A549 (cell line): ENCODE measurements at regions of chr10 and their contacts with region 1.

Region 1: GRCh38 chr10:103712570-103713498 is 142.5 kb downstream of the SH3PXD2A start:
- DNase-seq: peak; percentile 71 to 74
- ATAC-seq: peak; percentile 79 to 90
- H3K4me3 ChIP-seq: no peak overlapping the region
- H3K27ac ChIP-seq: peak overlapping the region in 1 of 2 experiments; percentile 35; a peak in 2 of 6 replicates
- H3K4me1 ChIP-seq: peaks cover 19% of the 10 kb centered on the region; the same call in 2 of the 3 replicates
- CTCF ChIP-seq: peak; percentile 94
- EP300 ChIP-seq: no peak
- POLR2A ChIP-seq: no peak
- RAD21 ChIP-seq: peak; percentile 98

Region 2: GRCh38 chr10:103491493-103492381 is 221.1 kb before region 1 on chr10:
- CTCF ChIA-PET with region 1: no interaction called
- POLR2A ChIA-PET with region 1: no interaction called
- DNase-seq: peak; percentile 68 to 77
- ATAC-seq: peak; percentile 69 to 74
- H3K4me3 ChIP-seq: no peak overlapping the region
- H3K27ac ChIP-seq: no peak overlapping the region
- H3K4me1 ChIP-seq: peaks cover 13% of the 10 kb centered on the region
- CTCF ChIP-seq: no peak
- EP300 ChIP-seq: no peak
- POLR2A ChIP-seq: no peak
- RAD21 ChIP-seq: no peak

Region 3: DNA sequence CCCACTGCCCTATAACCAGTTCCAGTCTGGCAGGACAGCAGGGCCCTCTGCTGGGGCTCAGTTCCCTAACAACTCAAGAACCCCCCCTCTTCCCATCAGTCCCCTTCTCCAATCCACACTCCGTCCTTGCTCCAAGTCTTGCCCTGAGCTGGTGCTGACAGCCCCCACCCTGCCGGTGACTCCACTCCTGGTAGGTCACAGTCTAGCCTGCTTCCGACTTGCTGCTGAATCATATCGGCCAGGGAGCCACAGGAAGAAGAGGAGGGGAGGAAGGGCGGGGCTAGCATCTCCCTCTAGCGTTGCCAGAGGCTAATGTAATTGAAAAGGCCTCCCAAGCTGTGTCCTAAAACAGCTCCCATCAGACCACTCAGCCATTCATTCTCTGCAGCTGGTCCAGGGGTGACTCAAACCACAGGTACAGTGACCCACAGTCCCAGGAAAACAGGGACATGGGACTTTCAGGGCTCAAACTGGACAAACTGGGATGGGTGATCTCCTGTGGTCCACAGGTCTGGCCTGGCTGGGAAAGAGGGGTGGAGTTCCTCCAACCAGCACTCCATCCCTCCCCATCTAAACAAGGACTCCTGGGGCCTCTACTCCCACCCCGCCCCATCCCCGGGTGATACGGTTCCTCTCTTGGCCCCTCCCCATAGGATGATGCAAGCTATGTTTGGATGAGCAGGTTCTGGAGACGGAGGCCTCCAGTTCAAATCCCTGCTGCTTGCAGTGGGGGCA is 16.3 kb before region 1 on chr10:
- CTCF ChIA-PET with region 1: interaction called, 53 read pairs
- POLR2A ChIA-PET with region 1: no interaction called
- DNase-seq: peak; percentile 91 to 95
- ATAC-seq: peak; percentile 82 to 90
- H3K4me3 ChIP-seq: 0 out of 3 replicates have a peak overlapping the region, but pooled peaks have one; percentile 7
- H3K27ac ChIP-seq: peak overlapping the region; percentile 90 to 91
- H3K4me1 ChIP-seq: peaks cover 61% of the 10 kb centered on the region
- CTCF ChIP-seq: peak; percentile 34
- EP300 ChIP-seq: no peak
- POLR2A ChIP-seq: no peak
- RAD21 ChIP-seq: peak; percentile 15 to 18; a peak in 1 of 5 replicates

Region 4: GRCh38 chr10:103752680-103753248 is 39.9 kb after region 1 on chr10:
- CTCF ChIA-PET with region 1: interaction called, 23 read pairs
- POLR2A ChIA-PET with region 1: no interaction called
- DNase-seq: peak in 1 of 2 experiments; percentile 35
- ATAC-seq: no peak
- H3K4me3 ChIP-seq: no peak overlapping the region
- H3K27ac ChIP-seq: no peak overlapping the region
- H3K4me1 ChIP-seq: peaks cover 14% of the 10 kb centered on the region
- CTCF ChIP-seq: peak; percentile 63
- EP300 ChIP-seq: no peak
- POLR2A ChIP-seq: no peak
- RAD21 ChIP-seq: peak; percentile 19 to 20; a peak in 2 of 5 replicates

Region 5: DNA sequence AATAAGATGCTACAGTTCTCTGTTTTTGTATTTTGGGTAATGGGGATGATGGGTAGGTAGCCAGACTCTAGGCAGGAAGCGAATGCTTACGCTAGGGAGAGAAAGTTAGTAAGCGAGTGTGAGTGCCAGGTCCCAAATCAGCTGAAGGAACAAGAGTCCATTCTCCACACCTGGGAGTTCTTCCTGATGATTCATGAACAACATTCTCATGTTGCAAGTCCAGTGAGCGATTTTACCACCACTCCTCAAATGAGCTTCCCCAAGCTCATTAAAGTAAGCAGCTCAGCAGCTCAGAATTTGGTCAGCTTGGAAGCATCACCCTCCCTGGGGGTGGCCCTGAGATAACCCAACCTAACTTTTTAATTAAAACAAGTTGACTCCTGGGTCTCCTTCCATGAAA is 115.3 kb after region 1 on chr10:
- CTCF ChIA-PET with region 1: interaction called, 12 read pairs
- POLR2A ChIA-PET with region 1: no interaction called
- DNase-seq: no peak
- ATAC-seq: no peak
- H3K4me3 ChIP-seq: no peak overlapping the region
- H3K27ac ChIP-seq: no peak overlapping the region
- H3K4me1 ChIP-seq: peaks cover 18% of the 10 kb centered on the region; the same call in 2 of the 3 replicates
- CTCF ChIP-seq: no peak
- EP300 ChIP-seq: no peak
- POLR2A ChIP-seq: no peak
- RAD21 ChIP-seq: no peak

Region 6: DNA sequence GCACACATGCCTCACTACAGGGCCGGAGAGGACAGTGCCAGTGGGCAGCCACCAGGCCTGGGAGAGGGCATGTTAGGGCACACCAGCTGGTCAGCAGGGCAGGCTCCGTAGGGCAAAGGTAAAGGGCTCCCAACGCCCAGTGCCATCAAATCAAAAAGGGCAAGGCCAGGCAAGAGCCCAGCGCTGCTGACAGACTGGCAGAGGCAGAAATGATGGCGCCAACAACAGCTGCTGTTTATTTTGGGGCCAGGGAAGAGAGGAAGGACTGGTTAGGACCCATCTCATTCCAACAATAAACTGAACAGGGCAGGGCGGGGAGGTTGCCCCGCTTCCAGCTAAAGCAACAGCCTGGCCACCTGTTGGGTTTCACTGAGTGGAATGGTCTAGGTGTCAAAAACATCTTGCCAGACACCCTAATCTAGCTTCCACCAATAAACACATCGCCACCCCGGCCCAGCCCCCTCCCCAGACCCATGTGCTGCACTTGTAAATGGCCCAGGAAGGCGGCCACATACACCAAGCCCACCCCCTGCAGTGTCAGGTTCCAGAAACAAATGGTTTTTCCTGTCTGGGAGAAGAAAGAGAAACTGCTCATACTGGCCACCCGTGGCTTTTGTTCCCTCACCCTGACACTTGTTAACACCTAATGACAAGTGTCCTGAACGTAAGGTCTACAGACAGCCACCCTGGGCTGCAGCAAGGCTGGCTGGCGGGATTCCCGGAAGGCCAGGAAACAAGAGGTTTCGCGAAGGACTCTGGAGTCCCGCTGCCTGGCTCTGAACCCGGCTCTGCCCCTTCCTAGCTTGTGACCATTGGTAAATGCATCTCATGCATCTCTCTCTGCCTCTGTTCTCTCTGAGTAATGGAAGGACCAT is 127.3 kb after region 1 on chr10:
- CTCF ChIA-PET with region 1: interaction called, 15 read pairs
- POLR2A ChIA-PET with region 1: no interaction called
- DNase-seq: no peak
- ATAC-seq: no peak
- H3K4me3 ChIP-seq: no peak overlapping the region
- H3K27ac ChIP-seq: no peak overlapping the region; a peak in 1 of 6 replicates
- H3K4me1 ChIP-seq: peaks cover 13% of the 10 kb centered on the region
- CTCF ChIP-seq: no peak
- EP300 ChIP-seq: no peak
- POLR2A ChIP-seq: no peak
- RAD21 ChIP-seq: no peak

Region 7: DNA sequence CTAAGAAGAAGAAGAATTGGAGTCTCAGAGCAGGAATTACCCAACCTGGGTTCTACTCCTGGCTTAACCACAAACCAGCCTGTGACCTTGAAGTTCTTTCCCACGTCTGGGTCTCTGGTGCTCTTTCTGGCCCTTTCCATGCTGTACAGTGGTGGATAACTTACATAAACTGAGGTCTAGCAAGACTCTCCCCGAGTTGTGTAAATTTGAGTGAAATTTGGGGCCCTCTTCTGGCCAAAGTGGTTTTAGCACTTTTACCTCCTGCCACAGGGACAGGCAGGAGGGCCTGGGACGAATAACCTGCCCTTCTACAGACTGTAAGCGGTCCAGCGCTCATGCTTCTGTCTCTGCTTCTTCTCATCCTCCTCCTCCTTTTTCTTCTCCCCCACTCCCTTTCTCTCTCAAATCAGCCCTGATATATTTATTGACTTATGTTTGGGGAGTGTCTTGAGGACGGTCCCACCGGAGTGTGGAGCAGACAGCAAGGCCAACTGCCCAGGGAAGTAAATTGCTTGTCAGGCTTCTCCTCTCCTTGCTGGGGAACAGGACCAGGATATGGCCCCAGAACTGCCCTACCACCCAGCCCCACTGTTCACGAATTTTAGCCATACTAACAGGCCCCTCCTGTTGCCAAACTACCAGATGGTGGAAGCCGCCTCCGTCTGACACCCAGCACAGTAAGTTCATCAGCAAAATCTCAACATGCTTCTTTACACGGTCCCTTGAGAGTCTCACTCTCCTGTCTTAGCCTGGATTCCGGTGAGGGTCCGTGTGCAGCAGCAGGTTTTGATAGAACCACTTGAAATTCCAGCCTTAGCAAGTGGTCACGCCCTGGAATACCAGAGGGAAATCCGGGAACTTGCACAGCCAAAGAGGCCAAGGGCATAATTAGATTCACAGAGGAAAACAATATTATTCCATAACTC is 146.6 kb after region 1 on chr10:
- CTCF ChIA-PET with region 1: interaction called, 184 read pairs
- POLR2A ChIA-PET with region 1: no interaction called
- DNase-seq: peak; percentile 68 to 69
- ATAC-seq: peak; percentile 75 to 89
- H3K4me3 ChIP-seq: no peak overlapping the region
- H3K27ac ChIP-seq: peak overlapping the region in 1 of 2 experiments; percentile 56; a peak in 3 of 6 replicates
- H3K4me1 ChIP-seq: peaks cover 29% of the 10 kb centered on the region
- CTCF ChIP-seq: peak; percentile 80
- EP300 ChIP-seq: no peak
- POLR2A ChIP-seq: no peak
- RAD21 ChIP-seq: peak; percentile 79 to 89

Region 8: DNA sequence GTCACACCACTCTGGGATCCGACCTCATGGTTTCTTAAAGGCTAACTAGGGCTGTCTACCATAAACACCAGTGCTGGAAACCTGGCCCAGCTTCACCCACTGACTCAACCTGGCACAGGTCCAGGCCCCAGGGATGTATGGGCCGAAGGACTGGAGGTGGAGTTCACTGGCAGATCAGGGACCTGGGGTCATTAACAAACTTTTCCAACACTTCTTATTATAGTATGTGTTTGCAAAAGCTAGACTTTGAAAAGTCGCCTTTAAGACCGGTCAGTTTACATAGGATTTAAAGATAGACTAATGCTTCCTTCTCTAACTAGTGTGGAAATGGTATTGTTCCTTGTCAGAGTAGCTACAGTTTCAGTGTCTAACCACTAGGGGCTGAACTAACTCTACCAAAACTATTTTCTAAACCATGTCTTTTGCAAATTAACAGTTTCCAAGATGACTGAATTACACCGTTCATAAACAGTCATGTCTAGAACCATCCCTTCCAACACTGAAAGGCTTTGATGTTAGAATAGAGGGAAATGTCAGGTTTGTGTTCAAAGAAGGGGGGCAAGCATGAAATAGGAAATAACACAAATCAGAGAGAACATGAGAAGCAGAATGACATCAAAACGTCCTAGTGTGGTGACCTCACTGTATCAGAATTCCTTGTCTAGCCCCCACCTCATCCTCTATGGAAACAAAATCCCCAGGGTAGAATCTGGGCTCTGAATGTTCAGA is 175.4 kb after region 1 on chr10:
- CTCF ChIA-PET with region 1: interaction called, 321 read pairs
- POLR2A ChIA-PET with region 1: no interaction called
- DNase-seq: peak; percentile 72 to 77
- ATAC-seq: peak; percentile 58 to 72; a peak in 5 of 6 replicates
- H3K4me3 ChIP-seq: no peak overlapping the region
- H3K27ac ChIP-seq: peak overlapping the region; percentile 73 to 90
- H3K4me1 ChIP-seq: peaks cover 41% of the 10 kb centered on the region
- CTCF ChIP-seq: peak; percentile 95
- EP300 ChIP-seq: no peak
- POLR2A ChIP-seq: no peak
- RAD21 ChIP-seq: peak; percentile 92 to 93